ENCODE measurements at regions of chr18 and their contacts with region 1.

Region 1: GRCh38 chr18:21955757-21956652 is 213.4 kb upstream of the GATA6 start:
- DNase-seq: peak; percentile 91
- H3K4me3 ChIP-seq: no peak overlapping the region
- H3K27ac ChIP-seq: peak overlapping the region in 3 of 5 donors; percentile 9 to 82 (median 13)
- H3K4me1 ChIP-seq: peaks cover 0 to 9% (median 2%) of the 10 kb centered on the region in 4 donors
- H3K27me3 ChIP-seq: no peaks in the 10 kb centered on the region
- CTCF ChIP-seq: peak in 5 of 7 experiments; percentile 63 to 92 (median 87)
- EP300 ChIP-seq: no peak
- POLR2A ChIP-seq: no peak

Region 2: DNA sequence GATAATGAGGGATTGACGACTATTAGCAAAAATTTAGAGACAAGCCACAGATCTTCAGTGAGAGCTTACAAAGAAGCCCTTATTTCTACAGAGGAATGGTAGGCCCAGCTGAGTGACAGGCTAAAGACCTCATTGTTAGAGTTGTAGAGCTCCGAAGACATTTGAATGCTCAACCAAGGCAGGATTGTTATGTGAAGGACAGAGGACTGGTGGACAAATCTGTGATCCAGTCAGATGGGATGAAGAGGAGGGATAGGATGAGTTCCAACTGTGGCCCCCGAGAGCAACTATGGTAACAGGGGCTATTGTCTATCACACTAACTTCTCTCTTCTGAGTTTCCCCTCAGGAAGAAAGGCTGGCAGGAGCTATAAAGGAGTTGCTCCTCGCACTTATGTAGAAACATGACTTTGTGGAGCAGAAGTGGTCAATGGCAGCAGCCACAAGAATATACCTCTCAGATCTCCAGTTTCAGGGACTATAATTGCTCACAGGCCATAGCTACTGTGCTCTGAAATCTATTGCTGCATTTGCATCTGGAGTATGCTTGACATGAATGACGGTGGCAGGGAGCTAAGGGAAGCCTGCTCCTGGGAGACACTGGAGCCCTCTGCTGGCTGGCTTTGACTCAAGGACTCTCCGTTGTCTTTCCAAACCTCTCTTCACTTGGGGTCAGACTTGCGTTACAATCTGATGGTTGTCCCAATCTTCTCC is 764.3 kb before region 1 on chr18:
- intact Hi-C with region 1: loop called (anchors 10 kb)
- DNase-seq: peak; percentile 52 to 72
- H3K4me3 ChIP-seq: no peak overlapping the region
- H3K27ac ChIP-seq: no peak overlapping the region
- H3K4me1 ChIP-seq: no peaks in the 10 kb centered on the region
- H3K27me3 ChIP-seq: peaks cover 0 to 10% (median 0%) of the 10 kb centered on the region in 3 donors
- CTCF ChIP-seq: peak in 3 of 7 experiments; percentile 13 to 36 (median 34)
- EP300 ChIP-seq: no peak
- POLR2A ChIP-seq: no peak

Measured in stomach (tissue), 19 donors.